ENCODE measurements at regions of chr9 and their contacts with region 1.

Region 1: GRCh38 chr9:133850161-133850560 is 112.0 kb upstream of the SARDH start:
- DNase-seq: no peak
- ATAC-seq: no peak
- H3K4me3 ChIP-seq: no peak overlapping the region
- H3K27ac ChIP-seq: no peak overlapping the region
- H3K4me1 ChIP-seq: peaks cover 0 to 3% of the 10 kb centered on the region in 2 experiments; a peak in 2 of 5 replicates
- H3K27me3 ChIP-seq: peaks cover 5 to 74% of the 10 kb centered on the region in 2 experiments
- CTCF ChIP-seq: no peak
- EP300 ChIP-seq: no peak
- POLR2A ChIP-seq: no peak
- RAD21 ChIP-seq: no peak

Region 2: DNA sequence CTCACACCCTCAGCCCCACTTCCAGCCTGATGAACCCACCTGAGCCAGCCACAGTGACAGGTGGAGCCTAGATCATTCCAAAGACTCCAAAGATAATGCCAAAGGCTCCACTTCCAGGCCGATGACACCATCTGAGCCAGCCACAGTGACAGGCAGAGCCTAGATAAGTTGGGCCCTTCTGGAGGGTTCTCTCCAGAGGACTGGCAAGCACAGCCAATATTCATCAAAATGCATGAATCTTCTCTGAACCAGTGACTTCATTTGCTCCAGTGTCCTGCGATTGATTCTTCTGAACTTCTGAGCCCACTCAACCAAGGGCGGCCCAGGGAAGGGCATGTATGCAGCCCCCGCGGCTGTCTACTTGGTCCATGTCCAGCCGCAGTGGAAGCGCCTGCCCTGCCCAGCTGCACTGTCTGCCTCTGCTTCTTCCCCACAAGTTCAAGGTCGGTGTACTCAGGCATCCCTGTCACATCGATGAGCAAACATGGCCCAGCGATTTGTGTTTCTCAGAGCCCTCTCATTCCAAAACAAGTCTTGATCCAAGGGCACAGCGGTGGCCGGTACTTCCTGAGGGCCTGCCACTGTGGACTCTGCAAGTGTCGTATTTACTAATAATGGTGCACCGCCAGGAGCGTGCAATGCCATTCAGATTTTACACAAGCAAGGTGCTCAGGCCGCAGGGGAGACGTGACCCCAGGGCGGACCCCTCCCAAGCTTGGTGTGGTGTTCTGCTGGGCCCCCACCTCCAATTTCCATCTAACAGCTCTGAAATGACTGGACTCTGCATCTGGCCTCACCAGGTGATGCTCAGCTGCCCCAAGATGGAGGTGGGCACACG is 35.0 kb after region 1 on chr9:
- CTCF ChIA-PET with region 1: no interaction called
- POLR2A ChIA-PET with region 1: interaction called, 3 read pairs
- in situ Hi-C with region 1: no loop called
- intact Hi-C with region 1: loop called (anchors 2 kb)
- DNase-seq: no peak
- ATAC-seq: no peak
- H3K4me3 ChIP-seq: no peak overlapping the region
- H3K27ac ChIP-seq: no peak overlapping the region
- H3K4me1 ChIP-seq: no peaks in the 10 kb centered on the region; a peak in 1 of 5 replicates
- H3K27me3 ChIP-seq: peaks cover 27 to 93% of the 10 kb centered on the region in 2 experiments; a peak in 4 of 5 replicates
- CTCF ChIP-seq: no peak
- EP300 ChIP-seq: no peak
- POLR2A ChIP-seq: no peak
- RAD21 ChIP-seq: no peak

Region 3: DNA sequence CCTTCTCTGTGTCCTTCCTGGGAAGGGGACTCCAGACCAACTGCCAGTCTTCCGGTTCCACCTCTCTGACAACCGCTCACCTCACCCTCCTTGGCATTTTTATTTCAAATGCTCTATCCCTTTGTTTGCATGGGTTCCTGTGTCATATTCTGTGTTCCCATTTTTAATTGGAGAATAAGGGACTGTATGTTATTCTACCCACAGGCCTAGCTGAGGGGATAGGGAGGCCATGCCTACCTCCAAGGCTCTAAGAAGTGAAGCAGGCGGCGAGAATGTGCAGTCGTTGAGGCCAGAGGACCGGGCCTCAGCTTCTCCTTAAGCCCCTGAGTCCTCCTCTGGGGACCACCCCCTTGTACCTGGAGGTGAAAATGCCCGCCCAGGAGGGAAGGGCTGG is 284.8 kb after region 1 on chr9:
- CTCF ChIA-PET with region 1: no interaction called
- POLR2A ChIA-PET with region 1: no interaction called
- in situ Hi-C with region 1: no loop called
- intact Hi-C with region 1: no loop called
- DNase-seq: peak in 2 of 4 experiments; percentile 52 to 61
- ATAC-seq: peak; percentile 49
- H3K4me3 ChIP-seq: peak overlapping the region; percentile 73
- H3K27ac ChIP-seq: peak overlapping the region; percentile 90
- H3K4me1 ChIP-seq: peaks cover 6 to 62% of the 10 kb centered on the region in 2 experiments; a peak in 4 of 5 replicates
- H3K27me3 ChIP-seq: no peaks in the 10 kb centered on the region; a peak in 2 of 5 replicates
- CTCF ChIP-seq: no peak
- EP300 ChIP-seq: no peak
- POLR2A ChIP-seq: no peak
- RAD21 ChIP-seq: no peak